ENCODE measurements at regions of chr2 and their contacts with region 1.

Region 1: GRCh38 chr2:64330281-64331113 is 123.5 kb upstream of the LGALSL start:
- DNase-seq: peak; percentile 60
- H3K4me3 Mint-ChIP-seq: peak overlapping the region; percentile 73
- H3K27ac Mint-ChIP-seq: peak overlapping the region; percentile 66
- H3K4me1 Mint-ChIP-seq: peaks cover 60% of the 10 kb centered on the region
- H3K27me3 Mint-ChIP-seq: peaks cover 10% of the 10 kb centered on the region

Region 2: DNA sequence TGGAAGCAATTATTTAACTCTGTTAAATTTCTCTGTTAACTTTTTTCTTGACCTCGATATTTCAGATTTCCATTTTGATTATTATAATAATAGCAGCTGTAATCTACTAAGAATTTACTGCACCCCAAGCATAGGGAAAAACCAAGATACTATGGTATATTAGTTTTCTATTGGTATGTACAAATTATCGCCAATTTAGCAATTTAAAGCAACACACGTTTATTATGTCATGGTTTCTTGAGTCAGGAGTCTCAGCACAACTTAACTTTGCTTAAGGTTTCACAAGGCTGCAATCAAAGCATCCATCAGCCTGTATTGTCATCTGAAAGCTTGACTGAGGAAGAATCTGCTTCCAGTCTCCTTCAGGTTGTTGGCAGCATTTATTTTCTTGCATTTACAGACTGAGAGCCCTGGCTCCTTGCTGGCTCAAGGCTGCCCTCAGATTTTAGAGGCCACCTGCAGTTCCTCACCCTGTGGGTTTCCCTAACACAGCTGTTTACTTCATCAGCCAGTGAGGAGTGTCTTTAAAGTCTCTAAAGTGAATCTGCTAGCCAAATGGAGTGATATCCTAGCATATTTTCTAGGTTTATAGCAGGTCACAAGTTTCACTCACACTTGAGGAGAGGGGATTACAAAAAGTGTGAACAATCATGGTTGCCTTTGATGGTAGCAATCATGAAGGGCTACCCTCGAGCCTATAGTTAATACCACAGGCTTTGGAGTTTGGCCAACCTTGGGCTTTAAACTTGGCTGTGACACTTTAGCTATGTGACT is 306.8 kb before region 1 on chr2:
- intact Hi-C with region 1: no loop called
- DNase-seq: no peak
- H3K4me3 Mint-ChIP-seq: no peak overlapping the region
- H3K27ac Mint-ChIP-seq: no peak overlapping the region
- H3K4me1 Mint-ChIP-seq: peaks cover 39% of the 10 kb centered on the region
- H3K27me3 Mint-ChIP-seq: no peaks in the 10 kb centered on the region

Region 3: DNA sequence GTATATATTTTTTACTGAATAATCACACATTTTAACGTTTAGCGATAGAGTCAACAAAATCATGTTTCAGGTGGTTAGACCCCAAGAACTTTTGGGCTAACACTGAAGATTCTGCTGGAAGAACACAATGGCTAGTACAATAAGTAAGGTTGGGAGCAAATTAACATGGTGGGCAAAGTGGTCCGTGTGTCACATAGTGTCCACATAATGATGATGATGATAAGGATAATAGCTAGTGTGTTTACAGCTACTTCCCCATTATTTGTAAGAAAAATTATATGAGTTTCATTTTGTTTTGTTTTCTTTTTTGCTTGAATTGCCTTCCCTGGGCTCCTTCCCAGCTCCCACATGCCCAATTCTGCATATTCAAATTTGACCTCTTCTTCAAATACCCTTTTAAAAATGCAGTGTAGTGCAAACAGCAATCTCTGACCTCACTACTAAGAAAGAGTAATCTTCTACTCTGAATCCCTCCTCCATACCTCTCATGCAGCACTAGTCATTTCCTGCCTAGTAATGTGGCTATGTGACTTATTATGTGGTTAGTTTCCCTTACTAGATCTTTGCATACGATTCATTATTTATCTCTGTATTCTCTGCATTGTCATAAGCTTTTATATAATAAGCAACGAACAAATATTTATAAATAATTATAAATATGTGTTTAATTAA is 294.3 kb before region 1 on chr2:
- intact Hi-C with region 1: loop called (anchors 1 kb)
- DNase-seq: peak; percentile 36
- H3K4me3 Mint-ChIP-seq: peak overlapping the region; percentile 51
- H3K27ac Mint-ChIP-seq: peak overlapping the region; percentile 89
- H3K4me1 Mint-ChIP-seq: peaks cover 55% of the 10 kb centered on the region
- H3K27me3 Mint-ChIP-seq: no peaks in the 10 kb centered on the region

Region 4: DNA sequence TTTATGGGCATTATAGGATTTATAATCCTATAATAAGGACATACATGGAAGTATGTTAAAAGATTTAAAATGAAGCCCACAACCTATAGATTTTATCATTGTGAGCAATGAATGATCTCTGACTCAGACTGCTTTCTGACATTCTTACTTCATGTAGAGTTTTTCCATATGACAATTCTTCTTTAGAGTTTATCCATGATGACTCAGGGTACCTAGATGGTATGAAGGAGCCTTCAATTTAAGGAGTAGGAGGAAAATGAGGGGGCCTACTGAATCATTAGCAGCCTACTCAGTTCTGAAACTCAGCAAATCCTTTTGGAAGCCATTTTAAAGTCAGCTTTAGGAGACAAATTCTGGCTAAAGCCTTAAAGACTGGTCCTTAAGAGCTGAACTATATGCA is 196.7 kb before region 1 on chr2:
- intact Hi-C with region 1: loop called (anchors 1 kb)
- DNase-seq: no peak
- H3K4me3 Mint-ChIP-seq: peak overlapping the region; percentile 39
- H3K27ac Mint-ChIP-seq: peak overlapping the region; percentile 88
- H3K4me1 Mint-ChIP-seq: peaks cover 90% of the 10 kb centered on the region
- H3K27me3 Mint-ChIP-seq: no peaks in the 10 kb centered on the region

Region 5: GRCh38 chr2:64214281-64215115 is 116.0 kb before region 1 on chr2:
- intact Hi-C with region 1: loop called (anchors 1 kb)
- DNase-seq: peak; percentile 33
- H3K4me3 Mint-ChIP-seq: peak overlapping the region; percentile 58
- H3K27ac Mint-ChIP-seq: peak overlapping the region; percentile 98
- H3K4me1 Mint-ChIP-seq: peaks cover 66% of the 10 kb centered on the region
- H3K27me3 Mint-ChIP-seq: no peaks in the 10 kb centered on the region

Region 6: GRCh38 chr2:64562148-64562784 is 231.8 kb after region 1 on chr2:
- intact Hi-C with region 1: loop called (anchors 1 kb)
- DNase-seq: no peak
- H3K4me3 Mint-ChIP-seq: no peak overlapping the region
- H3K27ac Mint-ChIP-seq: no peak overlapping the region
- H3K4me1 Mint-ChIP-seq: peaks cover 36% of the 10 kb centered on the region
- H3K27me3 Mint-ChIP-seq: no peaks in the 10 kb centered on the region

Region 7: GRCh38 chr2:64750817-64751285 is 420.4 kb after region 1 on chr2:
- intact Hi-C with region 1: loop called (anchors 1 kb)
- DNase-seq: peak; percentile 97
- H3K4me3 Mint-ChIP-seq: peak overlapping the region; percentile 91
- H3K27ac Mint-ChIP-seq: peak overlapping the region; percentile 98
- H3K4me1 Mint-ChIP-seq: peaks cover 34% of the 10 kb centered on the region
- H3K27me3 Mint-ChIP-seq: no peaks in the 10 kb centered on the region

Region 8: GRCh38 chr2:64767670-64768468 is 437.4 kb after region 1 on chr2:
- intact Hi-C with region 1: no loop called
- DNase-seq: peak; percentile 69
- H3K4me3 Mint-ChIP-seq: peak overlapping the region; percentile 91
- H3K27ac Mint-ChIP-seq: peak overlapping the region; percentile 95
- H3K4me1 Mint-ChIP-seq: peaks cover 47% of the 10 kb centered on the region
- H3K27me3 Mint-ChIP-seq: no peaks in the 10 kb centered on the region

Region 9: GRCh38 chr2:65056215-65057053 is 725.9 kb after region 1 on chr2 and contains the start of gene CEP68:
- intact Hi-C with region 1: loop called (anchors 10 kb)
- DNase-seq: peak; percentile 96
- H3K4me3 Mint-ChIP-seq: peak within 1 kb of the TSS; percentile 94
- H3K27ac Mint-ChIP-seq: peak within 1 kb of the TSS; percentile 84
- H3K4me1 Mint-ChIP-seq: peaks cover 48% of the 10 kb centered on the region
- H3K27me3 Mint-ChIP-seq: peaks cover 6% of the 10 kb centered on the region
- total RNA-seq, gene CEP68: 4.0 and 5.5 TPM in 2 replicates

Measured in activated T-helper 1 cell treated with anti-CD3 and anti-CD28 coated beads, Interleukin-12 subunit alpha, Interleukin-12 subunit beta, Interleukin-2, Interleukin-4 antibody, amounts not matched to agents 30 ng/mL and 10 ng/mL and 1 ng/mL, durations not matched to agents 14 hours and 24 hours and 36 hours (primary cell).